Mammary epithelial cell (primary cell): ENCODE measurements at regions of chr20 and their contacts with region 1.

Region 1: DNA sequence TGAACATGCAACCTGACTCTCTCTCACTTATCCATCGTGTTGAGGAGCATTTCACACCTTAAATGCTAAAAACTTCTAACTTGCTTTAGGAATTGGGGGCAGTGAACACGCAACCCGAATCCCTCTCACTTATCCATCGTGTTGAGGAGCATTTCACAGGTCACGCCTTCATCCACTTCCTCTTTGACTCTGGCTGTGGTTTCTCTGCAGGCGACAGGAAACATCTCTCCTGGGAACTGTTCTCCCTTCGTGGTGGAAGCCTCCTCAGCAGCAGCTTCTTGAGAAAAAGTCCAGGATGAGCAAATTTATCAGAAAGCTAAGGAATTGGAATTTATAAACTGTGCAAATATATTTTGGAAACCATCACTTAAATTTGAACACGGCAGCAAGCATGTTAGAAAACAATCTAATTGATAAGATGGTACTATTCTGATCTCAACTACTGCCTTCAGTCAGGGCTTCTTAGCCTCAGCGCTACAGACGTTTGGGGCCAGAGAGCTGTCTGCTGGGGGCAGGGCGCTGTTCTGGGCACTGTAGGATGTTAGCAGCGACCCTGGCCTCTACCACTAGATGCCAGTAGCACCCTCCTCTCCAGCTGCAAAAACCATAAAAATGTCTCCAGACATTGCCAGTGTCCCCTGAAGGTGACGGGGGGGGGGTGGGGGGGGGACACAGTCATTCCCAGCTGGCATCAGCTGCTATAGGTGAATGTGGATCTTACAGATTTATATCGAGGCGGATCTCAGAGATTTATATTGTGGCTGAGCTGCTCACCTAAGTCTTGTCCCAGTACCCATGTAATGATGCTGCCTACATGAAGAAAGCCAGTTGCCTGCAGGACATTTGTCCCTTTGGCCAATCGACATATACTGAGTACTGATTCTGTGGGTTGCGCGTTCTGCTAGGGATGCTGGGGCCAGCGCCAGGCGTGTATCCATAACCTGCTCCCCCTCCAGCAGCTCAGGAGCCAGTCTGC is 26.2 kb downstream of the CTCFL start:
- DNase-seq: no peak
- H3K4me3 ChIP-seq: no peak overlapping the region
- H3K27ac ChIP-seq: no peak overlapping the region
- H3K4me1 ChIP-seq: peaks cover 3% of the 10 kb centered on the region
- H3K27me3 ChIP-seq: no peaks in the 10 kb centered on the region
- CTCF ChIP-seq: peak; percentile 15 to 43

Region 2: DNA sequence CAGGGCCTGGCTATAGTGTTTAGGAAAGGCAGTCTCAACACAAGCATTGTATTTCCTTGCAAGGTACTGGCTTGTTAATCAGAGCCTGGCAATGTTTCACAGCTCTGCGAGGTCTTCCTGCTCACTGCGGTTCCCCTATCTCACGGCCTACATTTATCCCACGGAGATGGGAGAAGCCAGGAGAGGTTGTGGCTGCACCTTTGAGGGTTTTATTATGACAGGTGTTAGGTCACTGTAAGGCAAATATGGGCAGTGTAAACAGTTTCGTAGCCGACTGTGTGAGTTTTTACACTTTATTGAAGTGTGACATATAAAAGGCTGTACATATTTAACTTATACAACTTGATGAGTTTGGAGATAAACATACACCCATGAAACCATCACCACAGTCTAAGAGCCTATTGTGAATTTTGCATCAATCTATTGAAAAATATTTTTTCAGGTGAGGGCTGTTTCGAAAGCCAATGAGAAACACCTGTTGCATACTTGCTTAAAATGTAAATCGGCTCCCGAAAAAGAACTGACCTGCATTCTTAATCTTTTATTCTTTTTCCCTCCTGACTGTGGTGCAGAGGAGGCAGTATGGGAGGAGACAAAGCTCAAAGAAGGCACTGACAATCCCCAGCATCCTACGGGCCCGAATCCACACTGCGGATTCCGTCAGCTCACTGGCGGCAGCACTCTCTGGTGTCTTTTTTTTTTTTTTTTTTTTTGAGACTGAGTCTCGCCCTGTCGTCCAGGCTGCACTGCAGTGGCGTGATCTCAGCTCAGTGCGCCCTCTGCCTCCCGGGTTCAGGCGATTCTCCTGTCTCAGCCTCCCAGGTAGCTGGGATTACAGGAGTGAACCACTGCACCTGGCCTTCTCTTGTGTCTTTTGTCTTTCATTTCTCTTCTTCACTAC is 115.0 kb before region 1 on chr20:
- CTCF ChIA-PET with region 1: interaction called, 5 read pairs
- dilution Hi-C with region 1: no loop called
- in situ Hi-C with region 1: loop called (anchors 5 kb)
- intact Hi-C with region 1: loop called (anchors 1 kb)
- DNase-seq: no peak
- H3K4me3 ChIP-seq: no peak overlapping the region
- H3K27ac ChIP-seq: no peak overlapping the region
- H3K4me1 ChIP-seq: no peaks in the 10 kb centered on the region
- H3K27me3 ChIP-seq: no peaks in the 10 kb centered on the region
- CTCF ChIP-seq: no peak

Region 3: GRCh38 chr20:57596998-57597939 is 98.6 kb after region 1 on chr20:
- CTCF ChIA-PET with region 1: no interaction called
- dilution Hi-C with region 1: no loop called
- in situ Hi-C with region 1: no loop called
- intact Hi-C with region 1: loop called (anchors 5 kb)
- DNase-seq: peak; percentile 24
- H3K4me3 ChIP-seq: no peak overlapping the region
- H3K27ac ChIP-seq: no peak overlapping the region
- H3K4me1 ChIP-seq: peaks cover 9% of the 10 kb centered on the region
- H3K27me3 ChIP-seq: no peaks in the 10 kb centered on the region
- CTCF ChIP-seq: peak; percentile 62 to 87